BJ (cell line): ENCODE measurements at regions of chr14 and their contacts with region 1.

Region 1: GRCh38 chr14:99393047-99393655 is 87.5 kb downstream of the SETD3 start:
- DNase-seq: no peak
- H3K4me3 ChIP-seq: no peak overlapping the region
- H3K27me3 ChIP-seq: no peaks in the 10 kb centered on the region
- CTCF ChIP-seq: peak; percentile 85

Region 2: GRCh38 chr14:99378782-99379214 is 14.4 kb before region 1 on chr14:
- CTCF ChIA-PET with region 1: interaction called, 73 read pairs
- POLR2A ChIA-PET with region 1: no interaction called
- DNase-seq: no peak
- H3K4me3 ChIP-seq: no peak overlapping the region
- H3K27me3 ChIP-seq: peaks cover 3% of the 10 kb centered on the region; the same call in 1 of the 2 replicates
- CTCF ChIP-seq: no peak